Activated CD8-positive, alpha-beta T cell treated with anti-CD3 and anti-CD28 coated beads, Interleukin-2, amount 10 ng/mL, durations not matched to agents 7 days and 5 days (primary cell): ENCODE measurements at regions of chr5 and their contacts with region 1.

Region 1: DNA sequence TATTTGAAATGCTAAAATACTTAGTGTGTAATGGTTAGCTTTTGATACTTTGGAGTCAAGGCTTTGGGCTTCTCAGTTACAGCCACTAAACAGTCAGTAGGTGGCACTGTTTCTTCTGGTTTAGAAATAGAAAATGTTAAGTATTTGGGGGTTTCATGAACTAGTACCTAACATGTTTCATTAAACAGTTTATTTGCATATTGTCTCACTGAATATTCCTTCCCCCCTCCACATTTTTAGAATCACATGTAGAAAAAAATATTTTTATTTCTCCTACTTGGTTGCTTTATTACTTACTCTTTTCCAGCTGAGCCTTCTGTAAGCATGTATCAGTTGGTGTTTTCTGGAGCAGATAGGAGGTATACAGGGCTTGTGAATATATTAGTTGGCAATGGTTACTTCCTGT is 48.0 kb downstream of the IPO11 start:
- DNase-seq: no peak
- ATAC-seq: peak; percentile 69
- H3K4me3 Mint-ChIP-seq: no peak overlapping the region
- H3K27ac Mint-ChIP-seq: no peak overlapping the region
- H3K4me1 Mint-ChIP-seq: peaks cover 5% of the 10 kb centered on the region
- H3K27me3 Mint-ChIP-seq: no peaks in the 10 kb centered on the region

Region 2: GRCh38 chr5:62450259-62450658 is 10.3 kb before region 1 on chr5:
- CTCF ChIA-PET with region 1: interaction called, 20 read pairs
- POLR2A ChIA-PET with region 1: no interaction called
- DNase-seq: no peak
- ATAC-seq: no peak
- H3K4me3 Mint-ChIP-seq: no peak overlapping the region
- H3K27ac Mint-ChIP-seq: no peak overlapping the region
- H3K4me1 Mint-ChIP-seq: no peaks in the 10 kb centered on the region
- H3K27me3 Mint-ChIP-seq: no peaks in the 10 kb centered on the region